ENCODE measurements at regions of chr13 and their contacts with region 1.

Region 1: GRCh38 chr13:51797664-51798488 is 6.1 kb downstream of the DHRS12 start:
- DNase-seq: peak; percentile 51
- H3K4me3 ChIP-seq: no peak overlapping the region
- H3K27ac ChIP-seq: no peak overlapping the region
- H3K4me1 ChIP-seq: peaks cover 16 to 27% (median 17%) of the 10 kb centered on the region in 4 donors
- H3K27me3 ChIP-seq: no peaks in the 10 kb centered on the region
- CTCF ChIP-seq: peak; percentile 42 to 70 (median 47)
- EP300 ChIP-seq: no peak
- POLR2A ChIP-seq: no peak

Region 2: GRCh38 chr13:49828458-49828857 is 1969.4 kb before region 1 on chr13:
- in situ Hi-C with region 1: no loop called
- intact Hi-C with region 1: no loop called
- DNase-seq: no peak
- H3K4me3 ChIP-seq: no peak overlapping the region
- H3K27ac ChIP-seq: no peak overlapping the region
- H3K4me1 ChIP-seq: no peaks in the 10 kb centered on the region
- H3K27me3 ChIP-seq: no peaks in the 10 kb centered on the region
- CTCF ChIP-seq: no peak
- EP300 ChIP-seq: no peak
- POLR2A ChIP-seq: no peak

Region 3: GRCh38 chr13:51435002-51435578 is 362.8 kb before region 1 on chr13:
- in situ Hi-C with region 1: loop called (anchors 10 to 25 kb)
- intact Hi-C with region 1: no loop called
- DNase-seq: no peak
- H3K4me3 ChIP-seq: no peak overlapping the region
- H3K27ac ChIP-seq: no peak overlapping the region
- H3K4me1 ChIP-seq: peaks cover 0 to 5% (median 0%) of the 10 kb centered on the region in 4 donors
- H3K27me3 ChIP-seq: no peaks in the 10 kb centered on the region
- CTCF ChIP-seq: peak; percentile 44 to 52 (median 47)
- EP300 ChIP-seq: no peak
- POLR2A ChIP-seq: no peak

Region 4: GRCh38 chr13:51444922-51445321 is 353.0 kb before region 1 on chr13:
- in situ Hi-C with region 1: loop called (anchors 10 to 25 kb)
- intact Hi-C with region 1: loop called (anchors 5 kb)
- DNase-seq: no peak
- H3K4me3 ChIP-seq: no peak overlapping the region
- H3K27ac ChIP-seq: no peak overlapping the region
- H3K4me1 ChIP-seq: peaks cover 0 to 4% (median 2%) of the 10 kb centered on the region in 4 donors
- H3K27me3 ChIP-seq: no peaks in the 10 kb centered on the region
- CTCF ChIP-seq: no peak
- EP300 ChIP-seq: no peak
- POLR2A ChIP-seq: no peak

Region 5: GRCh38 chr13:51849145-51850101 is 51.5 kb after region 1 on chr13:
- in situ Hi-C with region 1: no loop called
- intact Hi-C with region 1: no loop called
- DNase-seq: no peak
- H3K4me3 ChIP-seq: no peak overlapping the region
- H3K27ac ChIP-seq: no peak overlapping the region
- H3K4me1 ChIP-seq: peaks cover 0 to 3% (median 0%) of the 10 kb centered on the region in 4 donors
- H3K27me3 ChIP-seq: no peaks in the 10 kb centered on the region
- CTCF ChIP-seq: peak; percentile 16 to 35 (median 24)
- EP300 ChIP-seq: no peak
- POLR2A ChIP-seq: no peak

Region 6: GRCh38 chr13:52026246-52026626 is 228.4 kb after region 1 on chr13:
- in situ Hi-C with region 1: no loop called
- intact Hi-C with region 1: no loop called
- DNase-seq: no peak
- H3K4me3 ChIP-seq: no peak overlapping the region
- H3K27ac ChIP-seq: no peak overlapping the region
- H3K4me1 ChIP-seq: peaks cover 0 to 8% (median 0%) of the 10 kb centered on the region in 4 donors
- H3K27me3 ChIP-seq: no peaks in the 10 kb centered on the region
- CTCF ChIP-seq: no peak
- EP300 ChIP-seq: no peak
- POLR2A ChIP-seq: no peak

Measured in transverse colon (tissue), 4 donors.